Calu3 (cell line): ENCODE measurements at regions of chr1 and their contacts with region 1.

Region 1: GRCh38 chr1:151311589-151312331 is 15.5 kb downstream of the PI4KB start:
- DNase-seq: peak; percentile 93
- H3K4me3 Mint-ChIP-seq: no peak overlapping the region
- H3K27ac Mint-ChIP-seq: peak overlapping the region; percentile 95
- H3K4me1 Mint-ChIP-seq: peaks cover 34% of the 10 kb centered on the region
- H3K27me3 Mint-ChIP-seq: no peaks in the 10 kb centered on the region
- CTCF ChIP-seq: no peak

Region 2: GRCh38 chr1:151327223-151327902 is 15.6 kb after region 1 on chr1 and contains the start of gene PI4KB:
- CTCF ChIA-PET with region 1: interaction called, 15 read pairs
- intact Hi-C with region 1: no loop called
- DNase-seq: peak; percentile 96
- H3K4me3 Mint-ChIP-seq: peak within 1 kb of the TSS; percentile 90
- H3K27ac Mint-ChIP-seq: peak within 1 kb of the TSS; percentile 92
- H3K4me1 Mint-ChIP-seq: peaks cover 14% of the 10 kb centered on the region
- H3K27me3 Mint-ChIP-seq: no peaks in the 10 kb centered on the region
- CTCF ChIP-seq: no peak
- total RNA-seq, gene PI4KB: 50.7 and 57.6 TPM in 2 replicates